Naive thymus-derived CD4-positive, alpha-beta T cell (primary cell): ENCODE measurements at regions of chr1 and their contacts with region 1.

Region 1: DNA sequence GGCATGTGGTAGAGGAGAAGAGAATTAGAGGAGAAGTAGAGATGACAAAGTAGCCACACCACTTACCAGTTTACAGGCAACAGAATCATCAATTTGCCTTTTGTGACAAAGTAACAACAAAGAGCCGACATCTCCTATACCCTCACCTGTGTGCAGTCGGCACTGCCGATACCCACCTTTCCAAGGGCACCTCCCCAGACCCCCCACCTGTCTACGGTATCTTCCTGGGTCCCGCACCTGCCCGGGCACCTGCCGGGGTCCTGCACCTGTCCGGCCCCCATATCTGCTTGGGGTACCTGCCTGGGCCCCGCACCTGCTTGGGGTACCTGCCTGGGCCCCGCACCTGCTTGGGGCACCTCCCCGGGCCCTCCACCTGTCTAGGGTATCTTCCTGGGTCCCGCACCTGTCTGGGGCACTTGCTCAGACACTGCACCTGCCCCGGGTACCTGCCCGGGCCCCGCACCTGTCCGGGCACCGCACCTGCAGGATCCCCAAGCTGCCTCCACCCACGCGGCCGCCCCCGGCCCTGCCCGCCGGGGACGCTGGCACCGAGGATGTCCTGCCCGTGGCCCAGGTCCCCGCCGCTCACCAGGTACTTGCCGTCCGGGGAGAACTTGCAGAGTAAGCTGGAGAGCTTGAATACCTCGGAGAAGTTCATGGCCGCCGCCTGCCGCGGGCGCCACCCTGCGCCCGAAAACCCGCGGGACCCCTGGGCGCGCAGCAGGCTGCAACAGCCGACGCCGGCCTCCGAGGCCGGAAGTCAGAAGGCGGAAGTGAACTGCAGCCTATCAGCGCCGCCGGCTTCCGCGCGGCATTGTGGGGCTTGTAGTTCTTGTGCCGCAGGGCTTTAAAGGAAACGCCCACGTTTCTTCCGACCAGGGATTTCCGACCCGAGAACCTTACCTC is at the start of gene WRAP73:
- DNase-seq: peak; percentile 76 to 88 (median 85)
- ATAC-seq: peak; percentile 99
- H3K4me3 ChIP-seq: peak within 1 kb of the TSS; percentile 63
- H3K4me3 Mint-ChIP-seq: peak within 1 kb of the TSS; percentile 79 to 91 (median 87)
- H3K27ac ChIP-seq: peak within 1 kb of the TSS; percentile 76
- H3K27ac Mint-ChIP-seq: peak within 1 kb of the TSS in 8 of 9 donors; percentile 2 to 82 (median 66)
- H3K4me1 ChIP-seq: peaks cover 11 to 16% of the 10 kb centered on the region in 2 donors
- H3K4me1 Mint-ChIP-seq: peaks cover 13 to 37% (median 33%) of the 10 kb centered on the region in 7 donors
- H3K27me3 ChIP-seq: peaks cover 3 to 20% of the 10 kb centered on the region in 2 donors
- H3K27me3 Mint-ChIP-seq: peaks cover 16 to 28% (median 28%) of the 10 kb centered on the region in 5 donors
- total RNA-seq, gene WRAP73: 28.1 to 42.0 (median 36.3) TPM

Region 2: GRCh38 chr1:3530926-3531818 is 118.4 kb before region 1 on chr1:
- CTCF ChIA-PET with region 1: no interaction called
- POLR2A ChIA-PET with region 1: no interaction called
- intact Hi-C with region 1: loop called in 1 of 2 experiments (anchors 1 kb)
- DNase-seq: peak; percentile 52 to 86 (median 81)
- ATAC-seq: peak; percentile 89
- H3K4me3 ChIP-seq: peak overlapping the region; percentile 90
- H3K4me3 Mint-ChIP-seq: peak overlapping the region; percentile 81 to 97 (median 86)
- H3K27ac ChIP-seq: peak overlapping the region; percentile 68
- H3K27ac Mint-ChIP-seq: peak overlapping the region; percentile 82 to 99 (median 95)
- H3K4me1 ChIP-seq: peaks cover 9 to 12% of the 10 kb centered on the region in 2 donors
- H3K4me1 Mint-ChIP-seq: peaks cover 9 to 26% (median 23%) of the 10 kb centered on the region in 7 donors
- H3K27me3 ChIP-seq: no peaks in the 10 kb centered on the region
- H3K27me3 Mint-ChIP-seq: no peaks in the 10 kb centered on the region

Region 3: DNA sequence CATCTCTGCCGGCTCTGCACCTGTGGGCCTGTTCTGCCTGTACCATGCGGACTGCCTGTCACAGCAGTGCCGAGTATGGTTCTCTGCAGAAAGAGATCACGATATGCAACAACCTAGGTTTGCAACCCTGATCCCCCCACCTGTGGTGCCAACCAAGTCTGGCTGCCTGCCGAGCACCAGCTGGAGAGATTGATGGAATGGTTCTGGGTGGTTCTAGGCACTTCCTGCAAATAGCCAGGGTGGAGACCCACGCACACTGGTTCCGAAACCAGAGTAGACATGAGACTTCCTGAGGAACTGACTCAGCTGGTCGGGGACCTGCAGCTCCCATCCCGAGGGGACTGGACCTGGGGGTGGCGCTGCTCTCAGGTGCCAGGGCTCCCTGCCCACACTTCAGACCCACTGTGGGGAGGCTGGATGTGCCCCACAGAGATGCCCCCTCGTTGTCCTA is 19.4 kb before region 1 on chr1:
- CTCF ChIA-PET with region 1: interaction called, 3 read pairs
- POLR2A ChIA-PET with region 1: interaction called, 10 read pairs
- intact Hi-C with region 1: no loop called
- DNase-seq: no peak
- ATAC-seq: no peak
- H3K4me3 ChIP-seq: no peak overlapping the region
- H3K4me3 Mint-ChIP-seq: no peak overlapping the region
- H3K27ac ChIP-seq: no peak overlapping the region
- H3K27ac Mint-ChIP-seq: peak overlapping the region in 4 of 9 donors; percentile 17 to 81 (median 51)
- H3K4me1 ChIP-seq: peaks cover 11% of the 10 kb centered on the region in 2 donors
- H3K4me1 Mint-ChIP-seq: peaks cover 5 to 10% (median 8%) of the 10 kb centered on the region in 7 donors
- H3K27me3 ChIP-seq: no peaks in the 10 kb centered on the region
- H3K27me3 Mint-ChIP-seq: no peaks in the 10 kb centered on the region

Region 4: GRCh38 chr1:3746830-3747521 is 97.4 kb after region 1 on chr1:
- CTCF ChIA-PET with region 1: no interaction called
- POLR2A ChIA-PET with region 1: no interaction called
- intact Hi-C with region 1: loop called (anchors 2 kb)
- DNase-seq: peak; percentile 76 to 91 (median 86)
- ATAC-seq: peak; percentile 99
- H3K4me3 ChIP-seq: peak overlapping the region; percentile 52
- H3K4me3 Mint-ChIP-seq: peak overlapping the region; percentile 72 to 87 (median 78)
- H3K27ac ChIP-seq: peak overlapping the region; percentile 71
- H3K27ac Mint-ChIP-seq: peak overlapping the region in 4 of 9 donors; percentile 65 to 88 (median 73)
- H3K4me1 ChIP-seq: peaks cover 7 to 12% of the 10 kb centered on the region in 2 donors
- H3K4me1 Mint-ChIP-seq: peaks cover 15 to 40% (median 33%) of the 10 kb centered on the region in 7 donors
- H3K27me3 ChIP-seq: no peaks in the 10 kb centered on the region
- H3K27me3 Mint-ChIP-seq: peaks cover 0 to 4% (median 0%) of the 10 kb centered on the region in 5 donors

Region 5: DNA sequence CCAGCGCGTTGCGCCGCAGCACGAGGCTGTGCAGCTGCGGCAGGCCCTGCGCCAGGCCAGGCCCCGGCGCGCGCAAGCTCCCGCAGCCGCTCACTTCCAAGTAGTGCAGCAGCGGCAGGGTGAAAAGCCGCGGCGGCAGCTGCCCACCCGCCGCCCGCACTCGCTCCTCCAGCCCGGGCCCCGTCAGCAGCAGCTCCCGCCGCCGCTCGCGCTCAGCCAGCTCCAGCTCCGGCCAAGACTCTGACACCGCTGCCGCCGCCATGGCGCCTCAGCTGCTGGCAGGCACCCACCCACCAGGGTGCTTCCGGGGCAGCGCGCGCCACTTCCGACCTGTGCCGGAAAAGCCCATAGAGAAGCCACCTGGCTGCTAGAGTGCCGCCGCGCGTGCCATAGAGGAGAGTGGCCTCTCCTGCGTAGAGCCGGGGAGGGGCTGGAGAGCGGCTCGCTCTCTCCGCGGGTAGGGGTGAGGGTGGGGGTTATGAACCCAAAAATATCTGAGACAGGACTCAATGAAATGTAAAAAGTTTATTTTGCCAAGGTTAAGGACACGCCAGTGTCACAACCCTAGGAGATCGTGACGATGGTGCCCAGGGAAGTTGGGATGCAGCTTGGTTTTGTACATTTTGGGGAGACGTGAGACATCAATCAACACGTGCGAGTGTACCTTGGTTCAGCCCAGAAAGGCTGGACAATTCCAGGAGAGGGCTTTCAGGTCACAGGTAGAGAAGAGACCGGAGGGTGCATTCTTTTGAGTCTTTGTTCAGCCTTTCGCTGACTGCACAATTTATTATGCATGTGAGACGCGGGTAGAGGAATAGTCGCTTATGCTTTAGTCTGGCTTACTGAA is 146.8 kb after region 1 on chr1 and contains the start of gene LRRC47:
- CTCF ChIA-PET with region 1: no interaction called
- POLR2A ChIA-PET with region 1: no interaction called
- intact Hi-C with region 1: loop called (anchors 1 kb)
- DNase-seq: peak; percentile 89 to 97 (median 94)
- ATAC-seq: peak; percentile 100
- H3K4me3 ChIP-seq: peak within 1 kb of the TSS; percentile 74
- H3K4me3 Mint-ChIP-seq: peak within 1 kb of the TSS; percentile 88 to 98 (median 93)
- H3K27ac ChIP-seq: peak within 1 kb of the TSS; percentile 69
- H3K27ac Mint-ChIP-seq: peak within 1 kb of the TSS; percentile 87 to 97 (median 93)
- H3K4me1 ChIP-seq: peaks cover 22 to 28% of the 10 kb centered on the region in 2 donors
- H3K4me1 Mint-ChIP-seq: peaks cover 8 to 52% (median 42%) of the 10 kb centered on the region in 7 donors
- H3K27me3 ChIP-seq: no peaks in the 10 kb centered on the region
- H3K27me3 Mint-ChIP-seq: peaks cover 9 to 11% (median 10%) of the 10 kb centered on the region in 5 donors
- total RNA-seq, gene LRRC47: 38.2 to 60.2 (median 43.9) TPM

Region 6: DNA sequence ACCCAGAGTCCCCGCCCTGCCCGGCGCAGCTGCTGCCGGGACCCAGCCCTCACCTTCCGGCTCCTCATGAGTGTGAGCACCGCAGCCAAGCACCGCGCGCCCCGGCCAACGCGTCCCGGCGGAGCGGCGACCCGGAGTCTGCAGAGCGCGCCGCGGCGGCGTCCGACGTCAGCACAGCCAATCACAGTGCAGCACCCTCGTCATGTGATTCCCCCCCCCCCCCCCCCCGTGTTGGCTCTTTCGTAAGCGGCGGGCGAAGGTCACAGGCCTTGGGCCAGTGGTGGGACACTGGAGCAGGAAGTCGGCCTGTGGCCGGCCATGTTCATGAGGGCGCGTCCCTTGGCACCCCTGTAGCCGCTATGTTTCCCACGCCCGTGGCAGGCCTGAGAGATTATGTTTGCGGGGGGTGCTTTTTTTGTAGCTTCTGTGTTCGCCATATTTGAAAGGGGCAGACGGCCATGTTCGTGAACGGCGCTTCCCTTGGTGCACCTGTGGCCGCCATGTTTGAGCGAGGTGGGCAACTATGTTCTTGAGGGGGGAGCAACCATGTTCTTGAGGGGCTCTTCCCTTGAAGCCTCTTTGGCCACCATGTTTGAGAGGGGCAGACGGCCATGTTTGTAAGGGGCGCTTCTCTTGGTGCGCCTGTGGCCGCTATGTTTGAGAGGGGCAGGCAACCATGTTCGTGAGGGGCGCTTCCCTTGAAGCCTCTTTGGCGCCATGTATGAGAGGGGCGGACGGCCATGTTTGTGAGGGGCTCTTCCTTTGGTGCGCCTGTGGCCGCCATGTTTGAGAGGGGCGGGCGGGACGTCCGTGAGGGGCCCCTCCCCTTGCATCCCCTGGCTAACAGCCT is 250.7 kb after region 1 on chr1 and contains the start of gene C1orf174:
- CTCF ChIA-PET with region 1: no interaction called
- POLR2A ChIA-PET with region 1: interaction called, 3 read pairs
- intact Hi-C with region 1: loop called in 1 of 2 experiments (anchors 1 kb)
- DNase-seq: peak; percentile 78 to 99 (median 96)
- ATAC-seq: peak; percentile 88
- H3K4me3 ChIP-seq: peak within 1 kb of the TSS; percentile 79
- H3K4me3 Mint-ChIP-seq: peak within 1 kb of the TSS; percentile 90 to 96 (median 94)
- H3K27ac ChIP-seq: peak within 1 kb of the TSS; percentile 94
- H3K27ac Mint-ChIP-seq: peak within 1 kb of the TSS; percentile 92 to 99 (median 96)
- H3K4me1 ChIP-seq: peaks cover 6 to 39% of the 10 kb centered on the region in 2 donors
- H3K4me1 Mint-ChIP-seq: peaks cover 23 to 71% (median 53%) of the 10 kb centered on the region in 7 donors
- H3K27me3 ChIP-seq: no peaks in the 10 kb centered on the region
- H3K27me3 Mint-ChIP-seq: no peaks in the 10 kb centered on the region
- total RNA-seq, gene C1orf174: 17.0 to 33.6 (median 27.1) TPM

Region 7: GRCh38 chr1:3992103-3992556 is 342.5 kb after region 1 on chr1:
- CTCF ChIA-PET with region 1: no interaction called
- POLR2A ChIA-PET with region 1: no interaction called
- intact Hi-C with region 1: no loop called
- DNase-seq: no peak
- ATAC-seq: no peak
- H3K4me3 ChIP-seq: no peak overlapping the region
- H3K4me3 Mint-ChIP-seq: no peak overlapping the region
- H3K27ac ChIP-seq: no peak overlapping the region
- H3K27ac Mint-ChIP-seq: peak overlapping the region in 1 of 9 donors; percentile 21
- H3K4me1 ChIP-seq: no peaks in the 10 kb centered on the region
- H3K4me1 Mint-ChIP-seq: no peaks in the 10 kb centered on the region
- H3K27me3 ChIP-seq: no peaks in the 10 kb centered on the region
- H3K27me3 Mint-ChIP-seq: peaks cover 0 to 33% (median 24%) of the 10 kb centered on the region in 5 donors